Cardiac septum (tissue), 1 donor: ENCODE measurements at regions of chr9 and their contacts with region 1.

Region 1: GRCh38 chr9:4662108-4662988 is at the start of gene PLPP6:
- DNase-seq: peak; percentile 94
- total RNA-seq, gene PLPP6: 2.7 TPM

Region 2: GRCh38 chr9:4713849-4714248 is 51.5 kb after region 1 on chr9:
- intact Hi-C with region 1: no loop called
- DNase-seq: no peak

Region 3: GRCh38 chr9:4740638-4741364 is 78.5 kb after region 1 on chr9 and contains the start of gene AK3:
- intact Hi-C with region 1: loop called (anchors 1 kb)
- DNase-seq: peak; percentile 92
- total RNA-seq, gene AK3: 108 TPM

Region 4: DNA sequence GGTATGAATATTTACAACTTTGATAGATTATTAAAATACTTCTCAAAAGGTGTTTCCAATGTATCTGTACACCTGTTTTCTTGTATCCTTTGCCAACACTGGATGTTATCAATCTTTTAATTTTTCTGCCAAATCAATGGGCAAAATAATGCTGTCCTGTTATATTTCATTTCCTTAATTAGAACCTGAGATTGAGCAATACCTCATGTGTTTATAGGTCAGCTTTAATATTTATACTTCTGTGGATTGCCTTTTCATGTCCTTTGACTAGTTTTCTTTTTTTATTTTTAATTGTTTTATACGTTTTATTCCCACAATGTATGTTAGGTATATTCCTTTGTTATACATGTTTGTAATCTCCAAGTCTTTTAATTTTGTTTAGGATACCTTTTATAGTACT is 400.3 kb after region 1 on chr9:
- intact Hi-C with region 1: no loop called
- DNase-seq: no peak